Right cardiac atrium (tissue), 5 donors: ENCODE measurements at regions of chr1 and their contacts with region 1.

Region 1: GRCh38 chr1:13828454-13829151 is 128.6 kb downstream of the PRDM2 start:
- DNase-seq: peak in 1 of 3 donors; percentile 77
- ATAC-seq: peak; percentile 37 to 55
- H3K4me3 ChIP-seq: no peak overlapping the region
- H3K27ac ChIP-seq: no peak overlapping the region
- H3K4me1 ChIP-seq: peaks cover 3% of the 10 kb centered on the region
- H3K27me3 ChIP-seq: no peaks in the 10 kb centered on the region

Region 2: DNA sequence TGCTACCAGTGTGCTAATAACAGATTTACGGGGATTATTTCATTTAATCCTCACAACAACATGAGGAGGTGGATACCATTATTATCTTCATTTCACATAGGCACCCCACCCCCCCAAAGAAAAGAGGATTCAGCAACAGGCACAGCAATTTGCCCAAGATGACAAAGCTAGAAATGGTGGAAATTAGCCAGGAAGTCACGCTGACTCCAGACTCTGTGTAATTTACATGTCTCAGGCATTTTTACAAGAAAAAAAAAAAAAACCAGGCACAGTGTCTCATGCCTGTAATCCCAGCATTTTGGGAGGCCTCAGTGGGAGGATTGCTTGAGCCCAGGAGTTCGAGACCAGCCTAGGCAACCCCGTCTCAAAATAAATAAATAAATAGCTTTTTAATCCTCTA is 166.1 kb before region 1 on chr1:
- intact Hi-C with region 1: loop called in 1 of 4 experiments (anchors 10 kb)
- DNase-seq: no peak
- ATAC-seq: peak in 1 of 2 donors; percentile 31
- H3K4me3 ChIP-seq: no peak overlapping the region
- H3K27ac ChIP-seq: no peak overlapping the region
- H3K4me1 ChIP-seq: no peaks in the 10 kb centered on the region
- H3K27me3 ChIP-seq: no peaks in the 10 kb centered on the region

Region 3: DNA sequence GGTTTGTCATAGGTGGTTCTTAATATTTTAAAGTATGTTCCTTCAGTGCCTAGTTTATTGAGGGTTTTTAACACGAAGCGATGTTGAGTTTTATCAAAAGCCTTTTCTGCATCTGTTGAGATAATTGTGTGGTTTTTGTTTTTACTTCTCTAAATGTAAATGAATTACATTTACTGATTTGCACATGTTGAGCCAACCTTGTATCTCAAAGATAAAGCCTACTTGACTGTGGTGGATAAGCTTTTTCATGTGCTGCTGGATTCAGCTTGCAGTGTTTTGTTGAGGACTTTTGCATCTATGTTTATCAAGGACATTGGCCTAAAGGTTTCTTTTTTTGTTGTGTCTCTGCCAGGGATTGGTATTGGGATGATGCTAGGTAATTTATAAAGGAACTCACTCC is 13.9 kb after region 1 on chr1:
- intact Hi-C with region 1: no loop called
- DNase-seq: no peak
- ATAC-seq: no peak
- H3K4me3 ChIP-seq: no peak overlapping the region
- H3K27ac ChIP-seq: no peak overlapping the region
- H3K4me1 ChIP-seq: no peaks in the 10 kb centered on the region
- H3K27me3 ChIP-seq: no peaks in the 10 kb centered on the region

Region 4: GRCh38 chr1:13950637-13951036 is 122.0 kb after region 1 on chr1:
- intact Hi-C with region 1: loop called in 1 of 4 experiments (anchors 10 kb)
- DNase-seq: no peak
- ATAC-seq: no peak
- H3K4me3 ChIP-seq: no peak overlapping the region
- H3K27ac ChIP-seq: peak overlapping the region; percentile 53
- H3K4me1 ChIP-seq: peaks cover 3% of the 10 kb centered on the region
- H3K27me3 ChIP-seq: no peaks in the 10 kb centered on the region